Psoas muscle (tissue), 8 donors: ENCODE measurements at regions of chr17 and their contacts with region 1.

Region 1: GRCh38 chr17:73595479-73595878 is 48.8 kb downstream of the SDK2 start:
- DNase-seq: peak in 1 of 2 donors; percentile 25
- ATAC-seq: peak; percentile 75 to 86 (median 78)
- H3K4me3 ChIP-seq: no peak overlapping the region
- H3K27ac ChIP-seq: no peak overlapping the region
- H3K4me1 ChIP-seq: no peaks in the 10 kb centered on the region
- H3K27me3 ChIP-seq: peaks cover 0 to 2% (median 0%) of the 10 kb centered on the region in 3 donors
- CTCF ChIP-seq: peak; percentile 56

Region 2: DNA sequence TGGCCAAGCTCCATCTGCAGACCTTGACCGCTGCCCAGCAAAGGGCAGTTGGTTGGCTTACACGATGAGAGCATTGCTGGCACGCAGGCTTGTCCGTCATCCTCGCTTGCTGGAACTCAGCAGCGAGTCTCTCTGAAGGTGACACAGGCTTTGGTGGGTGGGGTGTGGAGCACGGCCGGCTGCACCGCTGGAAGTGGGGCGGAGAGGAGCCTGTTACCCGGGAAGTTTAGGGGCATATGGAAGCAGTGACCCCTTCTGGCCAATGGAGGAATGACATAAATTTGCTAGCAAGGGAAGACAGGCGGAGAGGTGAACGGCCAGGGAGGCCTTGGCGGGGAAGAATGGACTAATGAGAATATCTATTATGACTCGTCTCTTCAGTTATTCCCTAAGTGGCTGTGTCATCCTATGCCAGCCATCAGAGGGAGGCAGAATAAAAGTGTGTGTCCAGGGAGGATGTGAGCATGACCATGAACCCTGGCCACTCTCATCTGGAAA is 114.7 kb after region 1 on chr17:
- intact Hi-C with region 1: loop called (anchors 2 to 5 kb)
- DNase-seq: peak in 1 of 2 donors; percentile 29
- ATAC-seq: peak; percentile 62 to 73 (median 68)
- H3K4me3 ChIP-seq: no peak overlapping the region
- H3K27ac ChIP-seq: no peak overlapping the region
- H3K4me1 ChIP-seq: no peaks in the 10 kb centered on the region
- H3K27me3 ChIP-seq: peaks cover 0 to 6% (median 0%) of the 10 kb centered on the region in 3 donors
- CTCF ChIP-seq: peak; percentile 68